Activated CD4-positive, alpha-beta T cell treated with anti-CD3 and anti-CD28 coated beads, Interleukin-2, amount 10 ng/mL, durations not matched to agents 24 days and 14 days (primary cell): ENCODE measurements at regions of chr18 and their contacts with region 1.

Region 1: DNA sequence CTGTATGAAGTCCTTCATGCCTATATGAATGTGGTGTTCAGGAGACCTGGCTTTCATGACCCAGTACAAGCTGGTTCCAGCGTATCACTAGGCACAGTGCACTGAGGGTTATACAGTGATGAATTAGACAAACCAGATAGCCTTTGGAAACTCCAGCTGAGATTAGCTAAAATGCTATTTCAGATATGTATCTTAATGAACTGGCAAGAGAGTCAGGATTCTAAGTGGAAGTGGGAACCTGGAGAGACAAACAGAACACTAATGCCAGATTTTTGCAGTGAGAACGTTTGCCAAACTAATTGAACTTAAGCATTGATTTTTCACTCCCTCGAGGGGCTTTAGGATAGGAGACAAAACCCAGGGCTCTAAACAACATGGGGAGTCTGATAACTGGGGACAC is 66.1 kb upstream of the EMILIN2 start:
- DNase-seq: no peak
- H3K4me3 Mint-ChIP-seq: no peak overlapping the region
- H3K27ac Mint-ChIP-seq: peak overlapping the region; percentile 5
- H3K4me1 Mint-ChIP-seq: peaks cover 6% of the 10 kb centered on the region
- H3K27me3 Mint-ChIP-seq: no peaks in the 10 kb centered on the region

Region 2: DNA sequence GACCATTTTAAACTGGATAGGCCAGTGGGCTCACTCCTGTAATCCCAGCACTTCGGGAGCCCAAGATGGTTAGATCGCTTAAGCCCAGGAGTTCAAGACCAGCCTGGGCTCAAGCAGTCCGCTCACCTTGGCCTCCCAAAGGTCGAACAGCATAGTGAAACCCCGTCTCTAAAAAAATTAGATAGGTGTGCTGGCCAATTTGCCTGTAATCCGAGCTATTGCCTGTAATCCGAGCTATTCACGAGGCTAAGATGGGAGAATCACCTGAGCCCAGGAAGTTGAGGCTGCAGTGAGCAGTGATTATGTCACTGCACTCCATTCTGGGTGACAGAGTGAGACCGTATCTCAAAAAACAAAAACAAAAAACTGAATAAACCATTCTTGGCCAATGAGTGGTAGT is 13.4 kb after region 1 on chr18:
- intact Hi-C with region 1: no loop called
- DNase-seq: no peak
- H3K4me3 Mint-ChIP-seq: no peak overlapping the region
- H3K27ac Mint-ChIP-seq: no peak overlapping the region
- H3K4me1 Mint-ChIP-seq: no peaks in the 10 kb centered on the region
- H3K27me3 Mint-ChIP-seq: no peaks in the 10 kb centered on the region

Region 3: DNA sequence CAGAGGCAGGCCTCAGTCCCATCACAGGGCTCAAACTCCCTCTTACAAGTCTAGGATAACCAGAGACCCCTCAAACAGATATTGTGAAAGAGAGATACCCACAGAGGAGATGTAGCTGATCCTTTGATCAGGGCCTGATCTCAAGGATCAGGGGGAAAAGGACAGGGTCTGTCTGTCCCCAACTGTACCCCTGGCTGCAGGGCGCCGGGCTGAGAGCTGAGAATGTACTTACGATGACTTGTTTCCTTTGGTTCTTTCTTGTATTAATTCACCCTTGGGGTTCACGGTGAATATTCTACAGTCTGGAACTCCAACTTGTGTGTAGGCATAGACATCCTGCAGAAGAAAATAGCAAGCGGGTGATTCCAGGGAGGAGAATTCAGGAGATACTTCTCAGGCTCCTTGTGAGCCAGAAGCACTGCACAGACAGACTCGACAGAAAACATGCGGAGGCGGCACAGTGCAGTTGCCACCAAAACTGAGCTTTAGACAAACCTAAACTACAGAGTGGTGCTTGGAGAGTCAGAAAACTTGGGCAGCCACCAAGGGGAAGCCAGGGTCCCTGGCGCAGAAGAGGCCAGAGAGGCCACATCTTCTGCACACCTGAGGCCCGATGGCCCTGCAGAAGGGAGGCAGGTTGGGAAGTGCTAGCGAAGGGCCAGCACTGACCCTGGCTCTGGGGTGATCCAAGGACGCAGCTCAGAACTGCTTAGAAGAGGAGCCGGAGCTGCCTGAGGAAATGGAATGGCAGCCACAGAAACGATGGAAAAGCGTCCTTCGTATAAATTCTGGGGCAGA is 140.0 kb after region 1 on chr18:
- intact Hi-C with region 1: loop called (anchors 5 kb)
- DNase-seq: no peak
- H3K4me3 Mint-ChIP-seq: no peak overlapping the region
- H3K27ac Mint-ChIP-seq: no peak overlapping the region
- H3K4me1 Mint-ChIP-seq: peaks cover 20% of the 10 kb centered on the region
- H3K27me3 Mint-ChIP-seq: no peaks in the 10 kb centered on the region